Heart left ventricle (tissue), 16 donors: ENCODE measurements at regions of chr2 and their contacts with region 1.

Region 1: DNA sequence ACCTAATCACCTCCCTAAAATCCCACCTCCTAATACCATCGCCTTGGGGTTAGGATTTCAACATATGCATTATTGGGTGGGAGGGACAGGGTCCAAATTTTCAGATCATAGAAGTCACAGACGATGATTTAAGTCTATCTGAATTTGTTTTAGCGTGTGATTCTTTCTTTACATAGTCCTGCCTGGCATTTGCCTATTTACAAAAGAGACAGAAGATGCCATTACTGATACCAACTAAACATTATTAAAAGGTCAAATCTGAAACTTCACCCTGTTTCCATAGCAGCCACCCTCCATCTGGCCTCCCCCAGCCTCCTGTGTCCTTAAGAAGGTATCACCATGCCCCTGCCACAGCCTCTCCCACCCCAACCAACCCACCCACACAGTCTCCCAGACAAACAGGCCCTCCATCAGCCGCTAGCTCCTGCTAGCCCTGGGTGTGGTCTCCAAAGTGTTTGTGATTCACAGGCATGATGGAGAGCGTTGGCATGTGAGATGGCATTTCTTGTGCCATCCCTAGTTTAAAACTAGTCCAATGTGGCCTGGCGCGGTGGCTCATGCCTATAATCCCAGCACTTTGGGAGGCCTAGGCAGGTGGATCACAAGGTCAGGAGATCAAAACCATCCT is 45.0 kb upstream of the GPR45 start:
- DNase-seq: no peak
- ATAC-seq: no peak
- H3K4me3 ChIP-seq: no peak overlapping the region
- H3K27ac ChIP-seq: no peak overlapping the region
- H3K4me1 ChIP-seq: no peaks in the 10 kb centered on the region
- H3K27me3 ChIP-seq: peaks cover 0 to 13% (median 0%) of the 10 kb centered on the region in 9 donors
- CTCF ChIP-seq: no peak
- POLR2A ChIP-seq: no peak

Region 2: DNA sequence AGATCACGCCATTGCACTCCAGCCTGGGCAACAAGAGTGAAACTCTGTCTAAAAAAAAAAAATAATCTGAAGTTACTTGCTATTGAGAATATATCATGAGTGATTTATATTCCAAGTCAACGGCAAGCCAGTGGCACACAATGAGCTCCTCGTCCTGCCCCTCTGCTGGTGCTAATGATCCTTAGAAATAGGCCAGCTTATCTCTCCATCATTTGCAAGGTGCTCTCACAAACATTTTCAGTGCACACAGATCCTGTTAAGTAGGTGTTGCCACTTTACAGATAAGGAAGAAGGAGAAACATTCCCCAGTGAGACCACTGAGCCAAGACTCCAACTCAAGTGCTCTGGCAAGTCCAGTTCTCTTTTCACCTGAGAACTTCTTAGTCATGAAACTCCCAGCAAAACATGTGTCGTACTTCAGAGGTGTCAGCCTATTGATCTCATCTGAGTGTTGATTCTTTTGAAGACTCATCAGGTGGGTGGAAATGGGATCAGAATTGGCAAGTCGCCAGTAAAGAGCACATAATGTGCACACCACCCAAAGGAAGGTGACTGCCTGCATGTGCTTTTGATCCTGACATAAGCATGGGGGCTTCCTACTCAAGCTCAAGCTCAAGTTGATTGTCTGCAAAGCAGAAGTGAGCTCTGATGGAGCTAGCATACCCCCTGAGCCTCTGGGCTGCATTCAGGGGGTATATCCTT is 46.1 kb before region 1 on chr2:
- intact Hi-C with region 1: loop called in 1 of 10 experiments (anchors 5 kb)
- DNase-seq: no peak
- ATAC-seq: no peak
- H3K4me3 ChIP-seq: no peak overlapping the region
- H3K27ac ChIP-seq: no peak overlapping the region
- H3K4me1 ChIP-seq: no peaks in the 10 kb centered on the region
- H3K27me3 ChIP-seq: peaks cover 3 to 63% (median 19%) of the 10 kb centered on the region in 9 donors
- CTCF ChIP-seq: no peak
- POLR2A ChIP-seq: no peak